ENCODE measurements at regions of chr11 and their contacts with region 1.

Region 1: GRCh38 chr11:32809313-32809712 is 14.9 kb upstream of the CCDC73 start:
- DNase-seq: peak; percentile 62
- H3K4me3 ChIP-seq: no peak overlapping the region; a peak in 1 of 4 replicates
- H3K27ac ChIP-seq: no peak overlapping the region
- H3K4me1 ChIP-seq: no peaks in the 10 kb centered on the region
- H3K27me3 ChIP-seq: peaks cover 10% of the 10 kb centered on the region; the same call in 1 of the 2 replicates
- CTCF ChIP-seq: peak; percentile 76
- EP300 ChIP-seq: no peak
- RAD21 ChIP-seq: peak; percentile 77

Region 2: DNA sequence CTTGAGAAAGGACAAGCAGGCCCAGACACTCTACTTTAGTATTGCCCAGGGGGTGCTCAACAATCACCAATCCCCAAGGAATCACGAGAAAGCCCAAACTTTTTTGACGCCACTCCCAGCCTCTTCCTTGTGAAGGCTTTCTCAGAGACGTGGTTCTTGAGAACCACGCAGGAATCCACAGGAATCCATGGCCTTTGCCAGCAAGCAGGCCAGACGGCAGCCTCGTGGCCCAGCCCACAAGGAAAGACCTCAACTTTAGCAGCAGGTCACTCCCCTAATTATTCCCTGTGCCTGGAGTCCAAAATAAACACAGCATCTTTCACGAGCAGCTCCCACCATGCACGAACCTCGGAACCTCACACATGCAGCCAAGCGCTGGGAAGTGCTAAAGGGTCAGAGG is 478.2 kb before region 1 on chr11:
- CTCF ChIA-PET with region 1: no interaction called
- POLR2A ChIA-PET with region 1: no interaction called
- DNase-seq: no peak
- H3K4me3 ChIP-seq: no peak overlapping the region
- H3K27ac ChIP-seq: no peak overlapping the region
- H3K4me1 ChIP-seq: peaks cover 0 to 8% of the 10 kb centered on the region in 2 experiments; a peak in 1 of 4 replicates
- H3K27me3 ChIP-seq: peaks cover 7% of the 10 kb centered on the region; the same call in 1 of the 2 replicates
- CTCF ChIP-seq: no peak
- EP300 ChIP-seq: no peak
- RAD21 ChIP-seq: no peak

Region 3: DNA sequence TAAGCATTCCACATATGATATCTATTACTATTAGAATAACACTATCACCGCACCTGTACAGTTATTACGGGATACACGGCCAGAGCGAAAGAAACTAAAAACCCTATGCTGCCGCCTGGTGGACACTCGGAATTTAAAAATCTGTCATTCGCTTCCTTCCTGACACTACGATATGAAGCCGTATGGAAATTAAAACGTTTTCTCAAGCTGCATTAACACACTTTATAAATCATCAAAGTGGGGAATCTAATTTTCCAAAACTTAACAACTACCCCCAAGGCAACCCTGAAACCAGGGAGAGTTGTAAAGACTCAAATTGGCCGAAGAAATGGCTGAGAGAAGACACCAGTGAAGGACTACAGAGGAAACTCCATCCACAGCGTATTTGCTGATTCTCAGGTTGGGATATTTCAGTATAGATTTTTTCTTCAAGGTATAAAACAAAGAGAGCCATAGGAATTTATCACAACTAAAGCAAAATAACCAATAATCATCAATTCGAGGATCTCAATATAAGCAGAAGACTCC is 16.3 kb before region 1 on chr11:
- CTCF ChIA-PET with region 1: interaction called, 16 read pairs
- POLR2A ChIA-PET with region 1: no interaction called
- DNase-seq: peak; percentile 39
- H3K4me3 ChIP-seq: peak overlapping the region; percentile 18 to 43; a peak in 2 of 4 replicates
- H3K27ac ChIP-seq: no peak overlapping the region
- H3K4me1 ChIP-seq: no peaks in the 10 kb centered on the region
- H3K27me3 ChIP-seq: peaks cover 23% of the 10 kb centered on the region
- CTCF ChIP-seq: peak; percentile 84
- EP300 ChIP-seq: no peak
- RAD21 ChIP-seq: peak; percentile 74

Region 4: GRCh38 chr11:33005175-33005574 is 195.9 kb after region 1 on chr11:
- CTCF ChIA-PET with region 1: no interaction called
- POLR2A ChIA-PET with region 1: no interaction called
- DNase-seq: no peak
- H3K4me3 ChIP-seq: no peak overlapping the region
- H3K27ac ChIP-seq: no peak overlapping the region
- H3K4me1 ChIP-seq: peaks cover 0 to 10% of the 10 kb centered on the region in 2 experiments; a peak in 2 of 4 replicates
- H3K27me3 ChIP-seq: no peaks in the 10 kb centered on the region
- CTCF ChIP-seq: no peak
- EP300 ChIP-seq: no peak
- RAD21 ChIP-seq: no peak